OCI-LY7 (cell line): ENCODE measurements at regions of chr9 and their contacts with region 1.

Region 1: GRCh38 chr9:26946753-26947727 is at the start of gene PLAA:
- DNase-seq: peak; percentile 91
- H3K4me3 ChIP-seq: peak within 1 kb of the TSS; percentile 95
- H3K27ac ChIP-seq: peak within 1 kb of the TSS; percentile 74
- H3K4me1 ChIP-seq: peaks cover 11% of the 10 kb centered on the region
- CTCF ChIP-seq: no peak
- total RNA-seq, gene PLAA: 18.1 and 21.4 TPM in 2 replicates

Region 2: DNA sequence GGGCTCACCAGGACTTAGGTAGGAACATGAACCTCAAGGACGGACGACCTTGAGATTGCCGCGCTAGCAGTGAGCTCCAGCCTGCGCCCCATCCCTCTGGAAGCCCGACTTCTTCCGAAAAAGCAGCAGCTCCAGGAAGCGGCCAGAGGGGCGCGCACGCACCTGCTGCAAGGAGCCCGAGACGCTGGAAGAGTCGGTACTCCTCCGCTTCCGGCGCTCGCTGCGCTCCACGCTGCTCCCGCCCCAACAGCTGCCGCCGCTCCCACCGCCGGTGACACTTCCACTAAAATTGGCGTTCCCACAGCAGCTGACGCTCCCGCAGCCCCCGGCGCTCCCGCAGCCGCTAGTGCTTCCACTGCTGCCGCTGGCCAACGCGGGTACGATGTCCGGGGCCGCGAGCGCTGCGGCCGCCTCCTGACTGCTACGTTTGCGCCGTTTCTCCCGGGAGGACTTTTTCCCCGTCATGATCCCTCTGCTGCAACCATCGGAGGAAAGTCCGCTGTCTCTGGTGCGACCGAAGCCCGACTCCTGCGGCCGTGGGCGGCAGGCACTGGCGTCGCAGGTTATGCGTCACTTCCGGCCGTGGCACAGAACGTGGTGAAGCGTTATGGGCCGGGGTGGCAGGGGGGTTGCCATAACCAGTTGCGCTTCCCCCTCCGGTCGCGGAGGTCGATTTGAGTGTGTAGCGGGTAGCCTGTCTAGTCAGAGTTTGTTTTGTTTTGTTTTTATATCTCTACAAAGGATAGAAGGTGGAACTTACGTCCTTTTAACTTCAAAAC is 54.6 kb before region 1 on chr9 and contains the start of gene CAAP1:
- CTCF ChIA-PET with region 1: interaction called, 3 read pairs
- POLR2A ChIA-PET with region 1: interaction called, 10 read pairs
- intact Hi-C with region 1: loop called (anchors 1 kb)
- DNase-seq: peak; percentile 96
- H3K4me3 ChIP-seq: peak within 1 kb of the TSS; percentile 89
- H3K27ac ChIP-seq: peak within 1 kb of the TSS; percentile 93
- H3K4me1 ChIP-seq: peaks cover 32% of the 10 kb centered on the region
- CTCF ChIP-seq: peak; percentile 57
- total RNA-seq, gene CAAP1: 38.8 and 52.3 TPM in 2 replicates

Region 3: DNA sequence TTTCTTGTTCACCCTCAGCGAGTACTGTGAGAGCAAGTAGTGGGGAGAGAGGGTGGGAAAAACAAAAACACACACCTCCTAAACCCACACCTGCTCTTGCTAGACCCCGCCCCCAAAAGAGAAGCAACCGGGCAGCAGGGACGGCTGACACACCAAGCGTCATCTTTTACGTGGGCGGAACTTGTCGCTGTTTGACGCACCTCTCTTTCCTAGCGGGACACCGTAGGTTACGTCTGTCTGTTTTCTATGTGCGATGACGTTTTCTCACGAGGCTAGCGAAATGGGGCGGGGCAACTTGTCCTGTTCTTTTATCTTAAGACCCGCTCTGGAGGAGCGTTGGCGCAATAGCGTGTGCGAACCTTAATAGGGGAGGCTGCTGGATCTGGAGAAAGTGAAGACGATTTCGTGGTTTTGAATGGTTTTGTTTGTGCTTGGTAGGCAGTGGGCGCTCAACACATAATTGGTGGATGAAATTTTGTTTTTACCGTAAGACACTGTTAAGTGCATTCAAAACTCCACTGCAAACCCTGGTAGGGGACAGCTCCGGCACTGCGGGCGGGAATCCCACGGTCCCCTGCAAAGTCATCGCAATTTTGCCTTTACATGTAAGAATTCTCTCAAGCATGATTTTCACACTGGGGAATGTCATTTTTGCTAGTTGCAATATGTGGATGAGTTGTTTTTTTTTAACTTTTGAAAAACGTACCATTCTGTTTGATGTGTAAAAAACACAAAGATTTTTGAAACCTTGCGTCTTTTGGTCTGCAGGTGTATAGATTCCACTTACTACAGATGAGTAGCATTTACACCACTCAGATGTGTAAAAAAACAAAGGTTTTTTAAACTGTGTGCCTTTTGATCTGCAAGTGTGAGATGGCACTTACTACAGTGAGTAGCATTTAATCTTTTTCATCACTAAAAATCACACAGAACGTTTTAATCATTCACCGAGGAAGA is 626.9 kb after region 1 on chr9:
- CTCF ChIA-PET with region 1: no interaction called
- POLR2A ChIA-PET with region 1: no interaction called
- intact Hi-C with region 1: loop called (anchors 2 kb)
- DNase-seq: peak; percentile 99
- H3K4me3 ChIP-seq: peak overlapping the region; percentile 72
- H3K27ac ChIP-seq: peak overlapping the region; percentile 79
- H3K4me1 ChIP-seq: peaks cover 13% of the 10 kb centered on the region
- CTCF ChIP-seq: no peak